ENCODE measurements at regions of chr1 and their contacts with region 1.

Region 1: DNA sequence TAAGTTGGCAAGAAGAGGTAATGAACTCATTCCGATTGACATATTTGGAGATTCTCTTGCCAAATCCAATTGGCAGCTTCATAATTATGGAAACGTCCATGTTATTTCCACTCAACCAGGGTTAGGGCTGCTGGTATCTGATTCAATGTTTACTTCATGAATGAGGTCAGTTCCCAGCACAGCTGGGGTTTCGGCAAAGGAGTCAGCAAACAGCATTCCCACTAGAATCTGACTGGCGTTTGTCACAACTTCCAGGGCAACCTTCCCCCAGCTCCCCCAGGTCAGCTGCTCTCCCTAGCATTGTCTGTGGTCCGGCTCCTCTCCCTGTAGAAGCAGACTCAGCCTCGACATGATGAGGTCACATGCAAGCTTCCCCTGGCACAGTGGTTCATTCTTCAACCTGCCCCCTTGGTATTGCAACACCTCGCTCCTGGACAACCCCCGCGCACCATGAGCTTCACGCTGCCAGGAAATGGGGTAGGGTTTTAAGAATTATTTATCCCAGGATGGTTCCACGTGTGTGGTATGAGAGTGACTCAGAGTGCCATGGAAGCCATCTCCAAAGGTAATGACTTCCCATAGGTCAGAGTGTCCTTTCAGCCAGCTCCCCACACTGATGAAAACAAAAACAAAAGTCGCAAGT is 100.7 kb upstream of the SLC25A33 start:
- DNase-seq: peak; percentile 65
- ATAC-seq: peak; percentile 36

Region 2: GRCh38 chr1:9028921-9029705 is 409.4 kb before region 1 on chr1:
- intact Hi-C with region 1: no loop called
- DNase-seq: no peak
- ATAC-seq: no peak

Region 3: GRCh38 chr1:9388335-9389180 is 50.0 kb before region 1 on chr1:
- intact Hi-C with region 1: loop called (anchors 5 kb)
- DNase-seq: no peak
- ATAC-seq: no peak

Measured in Right ventricle myocardium superior (tissue), 1 donor.